Endothelial cell of umbilical vein (primary cell): ENCODE measurements at regions of chr5 and their contacts with region 1.

Region 1: DNA sequence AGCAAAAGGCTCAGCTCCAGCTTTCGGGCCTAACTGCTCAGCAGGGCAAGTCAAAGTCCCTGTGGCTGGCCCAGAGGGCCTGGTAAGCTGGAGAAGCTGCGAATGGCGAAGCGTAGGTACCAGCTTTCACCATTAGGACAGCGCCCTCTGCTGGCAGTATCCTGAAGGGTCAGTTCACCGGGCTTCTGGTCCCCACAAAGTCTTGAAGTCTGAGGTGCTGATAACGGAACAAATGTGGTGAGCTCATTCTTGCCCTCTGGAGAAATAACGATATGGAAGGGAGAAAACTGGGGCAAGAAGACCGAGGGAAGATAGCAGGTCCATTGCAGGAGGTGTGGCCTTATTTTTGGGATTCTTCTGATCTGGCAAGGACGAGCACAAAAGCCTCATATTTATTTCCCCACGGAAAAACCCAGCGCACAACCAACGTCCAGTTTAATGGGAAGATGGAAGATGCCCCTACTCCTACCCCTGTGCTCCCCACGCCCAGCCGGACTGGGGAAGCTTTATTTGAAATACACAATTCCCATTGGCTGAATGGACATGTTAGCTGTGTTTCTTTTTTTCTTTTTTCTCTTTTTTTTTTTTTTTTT is 7.2 kb downstream of the SOWAHA start:
- DNase-seq: peak; percentile 87
- H3K4me3 ChIP-seq: no peak overlapping the region
- H3K27ac ChIP-seq: no peak overlapping the region
- H3K4me1 ChIP-seq: peaks cover 2% of the 10 kb centered on the region
- H3K27me3 ChIP-seq: no peaks in the 10 kb centered on the region
- CTCF ChIP-seq: peak; percentile 78 to 91
- POLR2A ChIP-seq: no peak

Region 2: DNA sequence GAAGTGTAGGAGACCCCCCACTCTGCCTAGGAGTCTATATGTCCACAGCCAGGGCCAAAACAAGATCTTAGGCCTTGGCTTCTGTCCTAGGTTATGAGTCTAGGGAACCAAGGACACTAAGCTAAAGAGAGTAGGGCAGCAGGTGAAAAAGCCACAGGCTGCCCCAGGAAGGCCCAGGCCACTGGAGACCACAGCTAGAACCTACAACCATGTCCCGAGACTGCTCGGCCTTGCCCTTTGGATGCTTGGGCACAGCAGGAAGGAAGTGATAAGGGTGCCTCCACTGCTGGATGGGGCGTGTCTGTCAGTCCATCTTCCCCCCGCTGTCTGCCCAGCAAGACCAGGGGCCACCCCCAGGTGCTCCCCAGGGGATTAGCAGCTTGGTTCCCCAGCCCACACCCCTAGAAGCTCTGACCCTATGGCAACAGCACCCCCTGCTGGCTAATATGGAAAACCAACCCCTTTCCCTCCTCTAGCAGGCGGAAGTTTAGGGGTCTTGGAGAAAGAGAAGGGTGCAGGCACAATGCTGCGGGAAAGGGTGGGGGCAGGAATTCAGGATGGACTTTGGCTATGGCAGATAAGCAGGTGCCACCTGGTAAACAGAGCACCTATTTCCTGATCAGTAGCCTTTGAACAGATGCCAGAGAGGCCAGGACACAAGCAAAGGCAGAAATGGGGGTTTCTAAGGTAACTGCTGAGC is 319.2 kb before region 1 on chr5:
- CTCF ChIA-PET with region 1: interaction called, 26 read pairs
- POLR2A ChIA-PET with region 1: no interaction called
- dilution Hi-C with region 1: no loop called
- intact Hi-C with region 1: loop called (anchors 5 kb)
- DNase-seq: peak; percentile 71
- H3K4me3 ChIP-seq: no peak overlapping the region
- H3K27ac ChIP-seq: peak overlapping the region; percentile 27
- H3K4me1 ChIP-seq: peaks cover 42% of the 10 kb centered on the region
- H3K27me3 ChIP-seq: no peaks in the 10 kb centered on the region
- CTCF ChIP-seq: peak; percentile 78 to 79
- POLR2A ChIP-seq: no peak

Region 3: DNA sequence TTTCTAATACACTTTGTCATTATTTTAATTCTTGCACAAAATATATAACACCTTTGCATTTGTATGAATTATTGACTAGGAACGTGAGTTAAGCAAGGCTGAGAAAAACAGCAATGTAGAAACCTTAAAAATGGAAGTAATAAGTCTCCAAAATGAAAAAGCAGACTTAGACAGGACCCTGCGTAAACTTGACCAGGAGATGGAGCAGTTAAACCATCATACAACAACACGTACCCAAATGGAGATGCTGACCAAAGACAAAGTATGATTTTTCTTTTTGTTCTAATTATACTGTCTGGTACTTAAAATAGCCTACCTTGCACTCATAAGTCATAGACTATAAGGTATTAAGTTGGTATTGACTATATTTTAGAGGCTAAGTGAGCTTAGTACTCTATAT is 229.1 kb before region 1 on chr5:
- CTCF ChIA-PET with region 1: interaction called, 13 read pairs
- POLR2A ChIA-PET with region 1: no interaction called
- dilution Hi-C with region 1: no loop called
- intact Hi-C with region 1: loop called (anchors 1 kb)
- DNase-seq: peak; percentile 23
- H3K4me3 ChIP-seq: no peak overlapping the region
- H3K27ac ChIP-seq: no peak overlapping the region
- H3K4me1 ChIP-seq: no peaks in the 10 kb centered on the region
- H3K27me3 ChIP-seq: no peaks in the 10 kb centered on the region
- CTCF ChIP-seq: no peak
- POLR2A ChIP-seq: no peak

Region 4: DNA sequence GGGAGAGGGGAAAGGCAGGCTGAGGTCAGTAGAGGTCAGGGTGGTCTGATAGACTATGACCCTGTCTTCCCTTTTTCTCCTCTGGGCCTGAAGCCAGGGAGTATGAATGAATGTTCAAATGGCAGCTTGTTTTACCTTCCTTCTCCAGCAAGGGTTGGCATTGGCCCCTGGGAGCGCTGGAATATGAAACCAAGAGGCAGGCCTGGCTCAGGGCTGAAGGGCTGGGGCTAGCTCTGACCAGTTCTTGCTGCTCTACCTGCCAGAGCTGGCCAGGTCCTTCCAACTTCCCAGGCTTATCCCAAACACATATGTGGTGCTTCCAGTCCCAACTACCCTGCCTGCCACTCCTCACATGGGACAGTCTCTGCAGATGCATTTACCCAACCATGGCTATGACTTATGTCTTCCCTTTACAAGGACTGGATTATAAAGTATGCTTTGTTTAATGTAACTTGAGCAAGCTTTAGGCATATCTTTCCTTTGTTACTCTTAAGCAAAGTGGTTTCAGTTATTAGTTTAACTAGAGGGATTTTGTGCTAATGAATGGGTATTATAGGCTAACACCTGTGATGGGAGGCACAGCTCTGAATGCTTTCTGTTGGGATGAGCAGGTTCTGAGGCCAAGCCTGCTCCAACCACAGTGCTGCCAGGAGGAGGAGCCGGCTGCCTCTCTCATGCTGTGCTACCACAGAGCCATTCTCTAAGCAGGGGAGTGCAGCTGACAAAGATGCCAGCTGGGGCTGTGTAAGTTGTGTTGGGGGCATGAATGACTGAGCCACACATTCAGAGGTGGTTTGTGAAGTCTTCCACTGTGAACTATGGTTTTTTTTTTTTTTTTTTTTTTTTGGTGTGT is 66.9 kb before region 1 on chr5:
- CTCF ChIA-PET with region 1: interaction called, 179 read pairs
- POLR2A ChIA-PET with region 1: no interaction called
- dilution Hi-C with region 1: no loop called
- intact Hi-C with region 1: loop called (anchors 1 kb)
- DNase-seq: no peak
- H3K4me3 ChIP-seq: no peak overlapping the region
- H3K27ac ChIP-seq: no peak overlapping the region
- H3K4me1 ChIP-seq: no peaks in the 10 kb centered on the region
- H3K27me3 ChIP-seq: no peaks in the 10 kb centered on the region
- CTCF ChIP-seq: peak in 1 of 2 donors; percentile 6
- POLR2A ChIP-seq: no peak

Region 5: DNA sequence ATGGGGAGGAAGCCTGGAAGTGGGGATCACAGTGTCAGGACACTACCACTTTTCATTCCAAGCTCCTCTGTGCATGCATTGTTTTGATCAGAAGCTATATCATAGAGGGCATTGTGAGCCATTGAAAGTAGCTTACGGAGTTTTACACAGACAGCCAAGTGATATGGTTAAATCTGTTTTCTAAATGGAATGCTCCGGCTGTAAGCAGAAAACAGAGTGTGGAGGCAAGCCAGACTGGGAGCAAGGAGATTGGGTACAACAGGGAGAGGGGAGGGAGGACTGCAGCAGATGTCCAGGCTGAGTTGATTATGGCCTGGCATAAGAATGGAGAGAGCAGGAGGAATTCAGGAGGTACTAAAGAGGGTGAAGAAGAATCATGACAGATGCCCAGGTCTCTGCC is 22.6 kb before region 1 on chr5:
- CTCF ChIA-PET with region 1: interaction called, 16 read pairs
- POLR2A ChIA-PET with region 1: no interaction called
- dilution Hi-C with region 1: no loop called
- intact Hi-C with region 1: no loop called
- DNase-seq: no peak
- H3K4me3 ChIP-seq: no peak overlapping the region
- H3K27ac ChIP-seq: no peak overlapping the region
- H3K4me1 ChIP-seq: no peaks in the 10 kb centered on the region
- H3K27me3 ChIP-seq: peaks cover 10 to 22% of the 10 kb centered on the region in 2 experiments
- CTCF ChIP-seq: no peak
- POLR2A ChIP-seq: no peak

Region 6: DNA sequence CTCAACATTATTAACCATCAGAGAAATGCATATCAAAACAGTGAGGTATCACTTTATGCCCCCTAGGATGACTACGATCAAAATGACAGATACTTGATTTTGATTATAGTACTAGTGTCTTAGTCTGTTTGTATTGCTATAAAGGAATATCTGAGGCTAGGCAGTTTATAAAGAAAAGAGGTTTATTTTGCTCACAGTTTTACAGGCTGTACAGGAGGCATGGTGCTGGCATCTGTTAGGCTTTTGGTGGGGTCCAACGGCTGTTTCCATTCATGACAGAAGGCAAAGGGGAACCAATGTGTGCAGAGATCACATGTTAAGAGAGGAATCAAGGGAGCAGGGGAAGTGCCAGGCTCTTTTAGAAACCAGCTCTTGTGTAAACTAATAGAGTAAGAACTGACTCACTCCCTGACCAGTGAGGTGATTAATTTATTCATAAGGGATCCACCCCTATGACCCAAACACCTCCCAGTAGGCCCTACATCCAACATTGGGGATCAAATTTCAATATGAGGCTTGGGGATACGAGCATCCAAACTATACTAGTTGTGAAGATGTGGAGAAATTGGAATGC is 159.2 kb after region 1 on chr5:
- CTCF ChIA-PET with region 1: no interaction called
- POLR2A ChIA-PET with region 1: no interaction called
- dilution Hi-C with region 1: no loop called
- intact Hi-C with region 1: no loop called
- DNase-seq: no peak
- H3K4me3 ChIP-seq: no peak overlapping the region
- H3K27ac ChIP-seq: no peak overlapping the region
- H3K4me1 ChIP-seq: no peaks in the 10 kb centered on the region
- H3K27me3 ChIP-seq: no peaks in the 10 kb centered on the region
- CTCF ChIP-seq: no peak
- POLR2A ChIP-seq: no peak